Activated B cell treated with CpG ODN at 0.5 μM for 24 hours (primary cell): ENCODE measurements at regions of chr10 and their contacts with region 1.

Region 1: GRCh38 chr10:90062786-90063185 is 361.4 kb downstream of the KIF20B start:
- DNase-seq: no peak
- ATAC-seq: no peak
- H3K4me3 Mint-ChIP-seq: no peak overlapping the region
- H3K27ac Mint-ChIP-seq: no peak overlapping the region
- H3K4me1 Mint-ChIP-seq: no peaks in the 10 kb centered on the region
- H3K27me3 Mint-ChIP-seq: peaks cover 2% of the 10 kb centered on the region
- CTCF ChIP-seq: no peak

Region 2: DNA sequence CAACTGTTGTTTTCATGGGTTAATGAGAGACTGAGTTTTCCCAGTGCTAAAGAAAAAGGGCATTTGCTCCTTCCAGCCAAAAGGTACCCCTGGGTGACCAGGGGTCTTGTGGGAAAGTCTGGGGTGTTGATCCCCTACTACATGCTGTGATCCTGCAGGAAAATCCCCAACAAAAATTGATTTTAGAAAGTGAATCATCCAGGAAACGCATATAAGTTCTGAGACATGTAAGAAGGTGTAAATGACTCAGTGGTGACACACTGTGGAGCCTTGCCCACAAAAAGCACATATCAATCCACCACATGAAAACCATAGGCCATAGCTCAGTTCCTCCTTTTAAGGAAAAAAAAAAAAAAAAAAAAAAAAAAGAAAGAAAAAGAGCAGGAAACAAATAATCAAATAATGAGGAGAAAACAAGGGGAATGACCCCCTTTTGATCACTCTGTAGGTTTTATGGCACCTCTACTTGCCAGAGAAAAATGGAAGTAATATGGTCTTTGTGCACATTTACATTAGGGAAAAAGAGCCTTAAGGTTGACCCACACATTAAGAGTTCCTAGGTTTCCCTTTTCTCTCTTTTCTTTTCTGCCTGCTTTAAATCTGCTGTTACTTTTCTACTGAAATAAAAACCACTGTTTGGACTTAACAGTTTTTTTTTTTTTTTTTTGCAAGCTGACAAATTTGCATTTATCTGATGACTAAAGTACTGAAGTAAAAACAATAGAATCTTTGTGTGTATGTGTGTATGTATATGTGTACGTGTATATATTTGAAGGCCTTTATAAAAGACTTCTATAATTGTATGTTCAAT is 24.6 kb after region 1 on chr10:
- CTCF ChIA-PET with region 1: no interaction called
- POLR2A ChIA-PET with region 1: interaction called, 13 read pairs
- intact Hi-C with region 1: no loop called
- DNase-seq: no peak
- ATAC-seq: peak; percentile 67
- H3K4me3 Mint-ChIP-seq: no peak overlapping the region
- H3K27ac Mint-ChIP-seq: no peak overlapping the region
- H3K4me1 Mint-ChIP-seq: peaks cover 6% of the 10 kb centered on the region
- H3K27me3 Mint-ChIP-seq: no peaks in the 10 kb centered on the region
- CTCF ChIP-seq: no peak

Region 3: DNA sequence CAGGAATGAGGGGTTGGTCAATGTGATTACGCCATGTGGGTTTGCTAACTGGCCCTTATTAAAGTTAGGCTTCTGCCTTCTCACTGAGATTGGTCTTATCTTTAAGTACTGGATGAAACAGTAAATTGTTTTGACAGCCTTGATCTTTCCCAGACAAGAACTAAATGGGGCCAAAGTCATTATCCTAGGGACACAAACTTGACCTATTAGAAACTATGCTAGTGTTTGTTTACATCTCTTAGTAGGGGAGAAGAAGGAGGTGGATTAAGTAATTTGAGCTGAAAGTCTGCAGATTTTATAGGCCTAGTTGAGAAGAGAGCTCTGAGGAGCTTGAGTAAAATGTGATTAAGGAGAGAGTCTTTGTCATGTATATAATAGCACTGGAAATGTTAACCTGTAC is 408.2 kb after region 1 on chr10:
- CTCF ChIA-PET with region 1: no interaction called
- POLR2A ChIA-PET with region 1: no interaction called
- intact Hi-C with region 1: no loop called
- DNase-seq: no peak
- ATAC-seq: no peak
- H3K4me3 Mint-ChIP-seq: no peak overlapping the region
- H3K27ac Mint-ChIP-seq: no peak overlapping the region
- H3K4me1 Mint-ChIP-seq: no peaks in the 10 kb centered on the region
- H3K27me3 Mint-ChIP-seq: peaks cover 2% of the 10 kb centered on the region
- CTCF ChIP-seq: no peak